ENCODE measurements at regions of chr1 and their contacts with region 1.

Region 1: DNA sequence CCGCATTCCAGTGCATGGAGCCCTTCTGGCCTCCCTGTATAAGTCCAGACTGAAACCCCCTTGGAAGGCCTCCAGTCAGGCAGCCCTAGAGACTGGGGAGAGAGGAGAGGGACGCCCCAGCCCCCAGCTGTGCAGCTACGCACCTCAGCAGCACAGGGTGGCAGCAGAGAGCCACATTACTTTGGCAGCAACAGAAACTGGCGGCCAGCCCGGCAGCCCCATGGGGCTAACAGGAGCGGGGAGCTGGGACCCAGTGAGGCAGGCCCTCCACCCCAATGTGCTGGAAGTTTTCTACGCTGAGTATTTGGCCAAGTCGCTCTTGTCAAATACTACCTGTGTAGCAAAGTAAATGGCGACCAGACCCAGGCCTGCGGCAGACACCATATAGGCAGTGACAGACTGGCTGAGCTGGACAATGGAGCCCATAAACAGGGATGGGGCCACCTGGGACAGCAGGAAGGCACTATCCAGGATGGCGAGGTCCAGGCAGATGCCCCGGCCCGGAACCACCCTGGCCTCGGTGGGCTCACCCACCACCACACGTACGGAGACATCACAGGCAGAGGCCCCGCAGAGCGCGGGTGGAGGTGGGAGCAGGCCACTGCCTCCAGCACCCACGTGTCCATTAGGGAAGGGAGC is 21.2 kb downstream of the SLC45A3 start:
- DNase-seq: peak; percentile 88
- ATAC-seq: peak; percentile 99
- H3K4me3 Mint-ChIP-seq: no peak overlapping the region
- H3K27ac Mint-ChIP-seq: no peak overlapping the region
- H3K4me1 Mint-ChIP-seq: no peaks in the 10 kb centered on the region
- H3K27me3 Mint-ChIP-seq: no peaks in the 10 kb centered on the region

Region 2: DNA sequence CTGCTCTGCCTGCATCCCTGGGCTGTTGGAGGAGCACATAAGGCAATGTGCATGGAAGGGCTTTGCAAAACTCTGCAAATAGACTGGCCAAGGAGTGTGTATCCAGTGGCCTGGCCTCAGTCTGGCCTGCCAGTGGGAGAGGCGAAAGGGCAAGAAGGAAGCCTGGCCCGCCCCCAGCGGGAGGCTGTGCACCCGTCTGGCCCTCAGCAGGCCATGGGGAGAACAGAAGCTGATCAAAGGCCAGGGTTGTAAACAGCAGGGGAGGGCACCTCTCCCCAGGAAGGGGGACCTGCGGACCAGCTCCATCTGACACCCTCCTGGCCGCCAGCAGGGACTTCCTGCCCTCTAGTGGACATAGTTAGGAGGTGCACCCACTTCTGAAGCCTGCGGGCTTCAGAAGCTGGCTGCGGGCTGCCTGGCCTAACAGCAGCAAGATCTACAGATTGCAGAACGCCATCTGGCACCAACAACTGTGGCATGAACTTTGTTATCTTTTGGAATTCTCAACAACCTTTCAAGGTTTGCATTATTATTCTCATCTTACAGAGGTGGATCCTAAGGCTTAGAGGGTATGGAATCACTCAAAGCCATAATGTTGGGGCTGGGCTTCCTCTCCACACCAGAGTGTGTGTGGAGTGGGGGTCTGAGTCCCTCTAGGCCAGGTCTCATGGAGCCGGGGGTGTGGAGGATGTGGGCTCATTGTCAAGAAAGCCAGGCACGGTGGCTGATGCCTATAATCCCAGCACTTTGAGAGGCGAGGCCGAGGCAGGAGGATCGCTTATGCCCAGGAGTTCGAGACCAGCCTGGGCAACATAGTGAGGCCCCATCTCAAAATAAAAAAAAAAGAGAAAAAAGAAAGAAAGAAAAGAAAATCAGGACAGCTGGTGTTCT is 173.5 kb before region 1 on chr1:
- CTCF ChIA-PET with region 1: interaction called, 7 read pairs
- POLR2A ChIA-PET with region 1: no interaction called
- intact Hi-C with region 1: loop called in 1 of 2 experiments (anchors 2 kb)
- DNase-seq: peak; percentile 78
- ATAC-seq: peak; percentile 69
- H3K4me3 Mint-ChIP-seq: no peak overlapping the region
- H3K27ac Mint-ChIP-seq: no peak overlapping the region
- H3K4me1 Mint-ChIP-seq: peaks cover 10% of the 10 kb centered on the region
- H3K27me3 Mint-ChIP-seq: peaks cover 40% of the 10 kb centered on the region

Region 3: GRCh38 chr1:205578780-205579606 is 80.1 kb before region 1 on chr1:
- CTCF ChIA-PET with region 1: interaction called, 11 read pairs
- POLR2A ChIA-PET with region 1: no interaction called
- intact Hi-C with region 1: no loop called
- DNase-seq: no peak
- ATAC-seq: no peak
- H3K4me3 Mint-ChIP-seq: no peak overlapping the region
- H3K27ac Mint-ChIP-seq: no peak overlapping the region
- H3K4me1 Mint-ChIP-seq: peaks cover 3% of the 10 kb centered on the region
- H3K27me3 Mint-ChIP-seq: peaks cover 8% of the 10 kb centered on the region

Region 4: GRCh38 chr1:205631727-205632373 is 27.2 kb before region 1 on chr1 and contains the start of gene ELK4:
- CTCF ChIA-PET with region 1: interaction called, 55 read pairs
- POLR2A ChIA-PET with region 1: no interaction called
- intact Hi-C with region 1: loop called in 1 of 2 experiments (anchors 1 kb)
- DNase-seq: peak; percentile 100
- ATAC-seq: peak; percentile 84
- H3K4me3 Mint-ChIP-seq: peak within 1 kb of the TSS; percentile 95
- H3K27ac Mint-ChIP-seq: peak within 1 kb of the TSS; percentile 99
- H3K4me1 Mint-ChIP-seq: peaks cover 32% of the 10 kb centered on the region
- H3K27me3 Mint-ChIP-seq: no peaks in the 10 kb centered on the region
- total RNA-seq, gene ELK4: 54.0 to 57.4 TPM

Region 5: GRCh38 chr1:205700865-205701401 is 41.9 kb after region 1 on chr1:
- CTCF ChIA-PET with region 1: interaction called, 11 read pairs
- POLR2A ChIA-PET with region 1: no interaction called
- intact Hi-C with region 1: no loop called
- DNase-seq: no peak
- ATAC-seq: no peak
- H3K4me3 Mint-ChIP-seq: no peak overlapping the region
- H3K27ac Mint-ChIP-seq: no peak overlapping the region
- H3K4me1 Mint-ChIP-seq: peaks cover 4% of the 10 kb centered on the region
- H3K27me3 Mint-ChIP-seq: peaks cover 6% of the 10 kb centered on the region

Region 6: DNA sequence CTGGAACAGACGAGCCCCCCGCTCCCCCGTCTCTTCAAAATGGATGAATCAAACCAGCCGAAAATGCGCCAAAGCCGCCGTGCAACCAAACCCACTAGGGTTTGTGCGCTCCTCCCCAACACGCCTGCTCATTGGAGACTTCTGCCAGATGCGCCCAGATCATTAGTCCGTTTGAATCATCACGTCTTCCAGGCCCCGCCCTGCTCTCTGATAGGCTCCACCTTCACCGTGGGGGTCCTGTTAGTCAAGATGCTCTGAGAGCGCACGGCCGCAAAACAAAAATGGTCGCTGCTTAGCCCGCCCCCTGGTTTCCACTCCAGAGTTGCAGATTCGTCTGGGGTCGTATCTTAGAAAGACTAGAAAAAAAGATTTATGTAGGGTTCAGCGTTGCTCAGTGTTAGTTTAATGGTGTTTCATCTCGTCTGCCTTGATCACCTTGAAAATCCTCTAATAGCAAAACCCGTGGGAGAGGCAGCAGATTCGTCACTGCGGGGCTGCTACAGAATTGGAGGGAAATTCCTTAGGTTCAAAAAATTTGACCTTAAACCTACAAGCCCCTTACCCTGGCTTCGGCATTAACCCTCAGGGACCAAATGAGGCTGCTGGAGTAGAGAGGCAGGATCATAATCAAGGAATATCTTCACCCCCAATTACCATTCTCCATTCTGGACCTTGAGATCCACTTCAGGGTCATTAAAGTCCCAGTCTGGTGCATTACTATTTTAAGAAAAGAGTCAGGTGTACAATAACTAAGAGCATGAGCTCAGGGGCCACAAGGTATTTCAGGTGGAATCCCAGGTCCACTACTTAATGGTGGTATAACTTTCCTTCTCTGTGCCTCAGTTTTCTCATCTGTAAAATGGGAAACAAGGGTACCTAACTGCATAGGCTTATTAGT is 91.3 kb after region 1 on chr1 and contains the start of gene NUCKS1:
- CTCF ChIA-PET with region 1: interaction called, 13 read pairs
- POLR2A ChIA-PET with region 1: interaction called, 4 read pairs
- intact Hi-C with region 1: no loop called
- DNase-seq: peak; percentile 98
- ATAC-seq: peak; percentile 81
- H3K4me3 Mint-ChIP-seq: peak within 1 kb of the TSS; percentile 87
- H3K27ac Mint-ChIP-seq: peak within 1 kb of the TSS; percentile 96
- H3K4me1 Mint-ChIP-seq: peaks cover 32% of the 10 kb centered on the region
- H3K27me3 Mint-ChIP-seq: no peaks in the 10 kb centered on the region
- total RNA-seq, gene NUCKS1: 189 to 260 TPM

Region 7: DNA sequence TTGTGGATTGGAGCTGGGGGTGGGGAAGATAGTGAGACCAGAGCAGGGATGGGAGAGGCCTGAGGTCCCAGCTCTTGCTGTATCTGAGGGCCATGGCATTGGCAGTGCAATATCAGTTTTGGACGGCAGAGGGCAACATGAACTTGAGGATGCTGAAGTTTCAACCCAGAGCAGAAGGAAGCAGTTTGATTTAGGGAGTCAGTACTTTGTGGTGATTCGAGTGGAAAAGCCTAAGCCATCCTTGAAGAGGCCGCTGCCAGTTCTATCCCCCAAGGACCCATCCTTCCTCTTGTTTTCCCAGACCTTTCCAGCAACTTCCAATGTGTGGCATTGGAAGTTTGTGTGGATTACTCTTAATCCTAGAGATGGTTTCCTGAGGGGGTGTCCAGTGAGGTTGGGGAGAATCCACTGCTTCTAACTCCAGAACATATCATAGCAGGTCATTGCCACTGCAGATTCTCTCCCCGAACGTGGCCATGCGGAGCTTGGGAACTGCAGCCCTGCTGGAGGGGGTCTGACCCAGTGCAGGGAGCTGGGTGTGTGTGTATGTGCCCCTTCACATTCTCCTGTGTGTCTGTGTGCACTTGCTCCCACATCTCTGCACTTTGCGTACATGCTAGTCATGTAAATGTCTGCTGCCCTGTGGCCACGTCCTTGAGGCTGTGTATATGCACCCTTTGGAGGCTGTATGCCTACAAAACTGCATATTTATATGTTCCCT is 260.1 kb after region 1 on chr1:
- CTCF ChIA-PET with region 1: interaction called, 12 read pairs
- POLR2A ChIA-PET with region 1: no interaction called
- intact Hi-C with region 1: loop called in 1 of 2 experiments (anchors 1 kb)
- DNase-seq: peak; percentile 86
- ATAC-seq: peak; percentile 86
- H3K4me3 Mint-ChIP-seq: no peak overlapping the region
- H3K27ac Mint-ChIP-seq: no peak overlapping the region
- H3K4me1 Mint-ChIP-seq: no peaks in the 10 kb centered on the region
- H3K27me3 Mint-ChIP-seq: no peaks in the 10 kb centered on the region

Region 8: DNA sequence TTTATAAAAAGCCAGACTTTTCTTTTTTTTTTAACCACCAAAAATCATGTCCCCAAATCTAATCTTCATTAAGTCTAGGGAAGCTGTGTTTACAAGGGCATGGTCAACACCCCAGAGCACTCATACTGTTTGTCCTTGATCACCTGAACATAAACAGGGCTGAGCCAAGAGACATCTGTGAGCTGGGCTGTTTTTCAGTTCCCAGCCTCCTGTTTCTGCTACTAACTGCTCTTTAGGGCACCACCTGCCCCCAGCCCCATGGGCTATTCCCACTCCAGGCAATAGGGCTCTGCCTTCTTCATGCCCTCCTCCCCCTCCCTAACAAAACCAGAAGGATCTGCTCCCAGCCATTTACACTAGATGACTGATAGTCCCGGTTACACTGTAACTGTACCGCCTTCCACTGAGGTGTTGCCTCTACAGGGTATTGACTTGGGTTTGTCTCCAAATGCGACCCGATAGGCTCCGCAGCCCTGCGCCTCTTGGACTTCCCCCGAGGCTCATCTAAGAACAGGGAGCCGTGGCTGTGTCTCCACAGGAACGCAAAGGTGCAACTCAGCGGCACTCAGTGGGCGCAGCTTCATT is 295.8 kb after region 1 on chr1:
- CTCF ChIA-PET with region 1: no interaction called
- POLR2A ChIA-PET with region 1: no interaction called
- intact Hi-C with region 1: no loop called
- DNase-seq: no peak
- ATAC-seq: no peak
- H3K4me3 Mint-ChIP-seq: no peak overlapping the region
- H3K27ac Mint-ChIP-seq: no peak overlapping the region
- H3K4me1 Mint-ChIP-seq: no peaks in the 10 kb centered on the region
- H3K27me3 Mint-ChIP-seq: peaks cover 2% of the 10 kb centered on the region